ENCODE measurements at regions of chr1 and their contacts with region 1.

Region 1: DNA sequence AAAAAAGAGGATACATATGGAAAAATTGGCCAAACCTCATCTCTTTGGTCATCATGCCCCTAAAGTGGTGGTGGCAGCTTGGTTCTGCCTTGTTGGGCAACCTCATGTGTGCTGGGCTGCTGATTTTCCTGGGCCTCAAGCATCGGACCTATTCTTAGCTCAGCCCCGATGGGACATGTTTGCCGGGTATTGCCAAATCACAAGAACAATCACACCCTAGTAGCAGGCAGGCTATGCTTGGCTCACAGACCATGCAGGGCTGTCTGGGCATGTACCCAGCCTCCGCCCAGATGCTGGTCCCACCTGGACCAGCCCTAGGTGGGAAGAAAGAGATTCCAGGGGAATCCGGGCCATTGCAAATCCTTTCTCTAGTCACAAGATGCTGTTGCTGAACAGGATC is 189.4 kb upstream of the FGGY start:
- DNase-seq: peak; percentile 91
- H3K4me3 Mint-ChIP-seq: no peak overlapping the region
- H3K27ac Mint-ChIP-seq: peak overlapping the region; percentile 72
- H3K4me1 Mint-ChIP-seq: peaks cover 8% of the 10 kb centered on the region
- H3K27me3 Mint-ChIP-seq: no peaks in the 10 kb centered on the region
- CTCF ChIP-seq: no peak

Region 2: GRCh38 chr1:59034925-59035324 is 72.6 kb before region 1 on chr1:
- CTCF ChIA-PET with region 1: no interaction called
- POLR2A ChIA-PET with region 1: no interaction called
- intact Hi-C with region 1: no loop called
- DNase-seq: no peak
- H3K4me3 Mint-ChIP-seq: no peak overlapping the region
- H3K27ac Mint-ChIP-seq: no peak overlapping the region
- H3K4me1 Mint-ChIP-seq: no peaks in the 10 kb centered on the region
- H3K27me3 Mint-ChIP-seq: no peaks in the 10 kb centered on the region
- CTCF ChIP-seq: no peak

Region 3: GRCh38 chr1:59096501-59096900 is 11.0 kb before region 1 on chr1:
- CTCF ChIA-PET with region 1: interaction called, 3 read pairs
- POLR2A ChIA-PET with region 1: interaction called, 12 read pairs
- intact Hi-C with region 1: no loop called
- DNase-seq: no peak
- H3K4me3 Mint-ChIP-seq: no peak overlapping the region
- H3K27ac Mint-ChIP-seq: no peak overlapping the region
- H3K4me1 Mint-ChIP-seq: no peaks in the 10 kb centered on the region
- H3K27me3 Mint-ChIP-seq: no peaks in the 10 kb centered on the region
- CTCF ChIP-seq: no peak

Region 4: DNA sequence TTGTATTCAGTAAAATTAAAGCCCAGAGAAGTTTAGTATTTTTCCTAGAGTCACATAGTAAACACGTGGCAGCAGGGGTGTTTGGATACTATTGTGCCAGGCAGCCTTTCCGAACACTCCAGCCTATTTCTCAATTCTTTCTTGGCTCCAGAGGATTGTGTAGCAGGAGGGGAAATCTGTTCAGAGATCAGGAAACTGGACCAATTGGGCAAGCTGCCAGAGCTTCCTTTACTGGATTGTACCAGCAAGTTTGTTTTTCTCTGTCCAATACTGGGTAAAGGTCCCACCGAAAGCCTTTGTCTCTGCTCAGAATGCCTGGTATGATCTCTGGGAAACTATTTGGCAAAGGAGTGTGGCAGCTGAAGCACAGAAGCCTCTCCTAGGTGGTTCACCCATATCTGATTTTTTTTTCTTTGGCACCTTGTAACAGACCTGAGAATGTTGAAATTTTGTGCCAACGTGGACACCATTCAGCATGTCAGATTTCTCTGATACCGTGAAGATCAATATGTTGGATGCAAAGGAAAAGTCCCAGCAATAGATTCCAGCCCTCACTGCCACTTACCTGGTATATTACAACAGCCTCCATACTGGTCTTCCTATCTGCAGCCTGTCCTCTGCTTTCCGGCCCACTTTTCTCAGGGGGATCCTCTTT is 315.5 kb after region 1 on chr1:
- CTCF ChIA-PET with region 1: no interaction called
- POLR2A ChIA-PET with region 1: no interaction called
- intact Hi-C with region 1: no loop called
- DNase-seq: peak; percentile 85
- H3K4me3 Mint-ChIP-seq: no peak overlapping the region
- H3K27ac Mint-ChIP-seq: peak overlapping the region; percentile 59
- H3K4me1 Mint-ChIP-seq: peaks cover 26% of the 10 kb centered on the region
- H3K27me3 Mint-ChIP-seq: no peaks in the 10 kb centered on the region
- CTCF ChIP-seq: no peak